Activated CD8-positive, alpha-beta T cell treated with anti-CD3 and anti-CD28 coated beads for 36 hours (primary cell): ENCODE measurements at regions of chr4 and their contacts with region 1.

Region 1: GRCh38 chr4:88533937-88534750 is 10.6 kb upstream of the PYURF start:
- DNase-seq: no peak
- ATAC-seq: no peak
- H3K4me3 Mint-ChIP-seq: no peak overlapping the region
- H3K27ac Mint-ChIP-seq: no peak overlapping the region
- H3K4me1 Mint-ChIP-seq: peaks cover 8% of the 10 kb centered on the region
- H3K27me3 Mint-ChIP-seq: no peaks in the 10 kb centered on the region
- CTCF ChIP-seq: no peak

Region 2: DNA sequence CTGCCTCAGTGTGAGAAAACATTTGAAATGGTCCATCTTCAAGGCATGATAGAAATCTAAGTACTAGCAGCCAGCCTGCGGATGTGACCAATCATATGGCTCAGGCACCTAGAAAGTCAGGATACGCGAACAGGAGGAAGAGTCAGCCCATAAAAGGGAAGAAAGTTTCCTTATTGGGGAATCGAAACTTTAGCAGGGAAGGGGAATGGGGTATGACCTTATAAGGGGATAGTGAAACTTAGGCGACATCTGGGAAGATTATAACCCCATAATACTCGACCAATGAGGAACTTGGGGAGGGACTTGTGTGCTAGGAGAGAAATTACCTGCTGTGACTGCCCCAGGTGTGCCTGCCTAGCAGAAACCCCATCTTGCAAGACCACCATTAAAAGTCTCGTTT is 15.7 kb after region 1 on chr4:
- CTCF ChIA-PET with region 1: interaction called, 12 read pairs
- POLR2A ChIA-PET with region 1: no interaction called
- intact Hi-C with region 1: no loop called
- DNase-seq: no peak
- ATAC-seq: no peak
- H3K4me3 Mint-ChIP-seq: no peak overlapping the region
- H3K27ac Mint-ChIP-seq: no peak overlapping the region
- H3K4me1 Mint-ChIP-seq: no peaks in the 10 kb centered on the region
- H3K27me3 Mint-ChIP-seq: no peaks in the 10 kb centered on the region
- CTCF ChIP-seq: no peak

Region 3: GRCh38 chr4:88613417-88613875 is 79.3 kb after region 1 on chr4:
- CTCF ChIA-PET with region 1: interaction called, 19 read pairs
- POLR2A ChIA-PET with region 1: no interaction called
- intact Hi-C with region 1: no loop called
- DNase-seq: peak; percentile 43
- ATAC-seq: peak; percentile 77
- H3K4me3 Mint-ChIP-seq: peak overlapping the region; percentile 68
- H3K27ac Mint-ChIP-seq: peak overlapping the region; percentile 92
- H3K4me1 Mint-ChIP-seq: peaks cover 76% of the 10 kb centered on the region
- H3K27me3 Mint-ChIP-seq: no peaks in the 10 kb centered on the region
- CTCF ChIP-seq: no peak

Region 4: GRCh38 chr4:88659055-88659889 is 125.1 kb after region 1 on chr4:
- CTCF ChIA-PET with region 1: interaction called, 46 read pairs
- POLR2A ChIA-PET with region 1: no interaction called
- intact Hi-C with region 1: loop called (anchors 2 kb)
- DNase-seq: peak; percentile 57
- ATAC-seq: peak; percentile 87
- H3K4me3 Mint-ChIP-seq: no peak overlapping the region
- H3K27ac Mint-ChIP-seq: no peak overlapping the region
- H3K4me1 Mint-ChIP-seq: peaks cover 3% of the 10 kb centered on the region
- H3K27me3 Mint-ChIP-seq: no peaks in the 10 kb centered on the region
- CTCF ChIP-seq: peak; percentile 67

Region 5: GRCh38 chr4:88743696-88744095 is 209.6 kb after region 1 on chr4:
- CTCF ChIA-PET with region 1: interaction called, 12 read pairs
- POLR2A ChIA-PET with region 1: interaction called, 6 read pairs
- intact Hi-C with region 1: no loop called
- DNase-seq: no peak
- ATAC-seq: no peak
- H3K4me3 Mint-ChIP-seq: no peak overlapping the region
- H3K27ac Mint-ChIP-seq: no peak overlapping the region
- H3K4me1 Mint-ChIP-seq: peaks cover 3% of the 10 kb centered on the region
- H3K27me3 Mint-ChIP-seq: no peaks in the 10 kb centered on the region
- CTCF ChIP-seq: no peak